GM12878 (cell line): ENCODE measurements at regions of chr6 and their contacts with region 1.

Region 1: DNA sequence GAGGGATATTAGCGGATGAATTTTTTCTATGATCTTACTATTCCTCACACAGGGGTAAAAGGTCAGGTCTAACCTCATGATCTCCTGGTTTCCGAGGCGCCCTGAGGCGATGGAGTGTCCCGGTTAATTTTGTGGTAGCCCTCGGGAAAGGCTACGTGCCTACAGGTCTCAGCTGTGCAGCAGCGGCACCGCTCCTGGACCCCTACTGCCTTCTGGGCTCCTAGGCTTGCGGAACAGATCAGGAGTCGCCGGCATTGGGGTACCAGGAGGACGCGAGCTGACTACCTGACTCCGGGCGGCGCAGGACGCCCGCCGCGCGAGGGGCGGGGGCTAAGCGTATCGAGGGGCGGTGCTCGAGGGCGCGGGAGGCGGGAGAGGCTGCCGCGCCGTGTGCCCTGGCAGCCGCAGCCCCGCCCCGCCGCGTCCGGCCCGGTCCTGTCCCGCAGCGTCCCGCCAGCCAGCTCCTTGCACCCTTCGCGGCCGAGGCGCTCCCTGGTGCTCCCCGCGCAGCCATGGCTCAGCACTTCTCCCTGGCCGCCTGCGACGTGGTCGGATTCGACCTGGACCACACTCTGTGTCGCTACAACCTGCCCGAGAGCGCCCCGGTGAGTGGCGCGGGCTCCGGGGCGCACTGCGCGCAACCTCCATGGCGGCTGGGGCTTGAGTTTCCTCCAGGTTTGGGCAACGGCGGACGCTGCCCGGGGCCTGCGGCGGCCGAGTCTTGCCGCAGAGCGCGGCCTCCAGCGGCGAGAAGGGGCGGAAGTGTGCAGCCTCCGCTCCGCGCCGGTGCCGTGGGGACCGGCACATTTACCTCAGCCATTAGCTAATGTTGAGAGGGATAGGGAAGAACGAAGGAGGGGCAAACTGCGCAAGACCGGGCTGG is at the start of gene NT5DC1:
- DNase-seq: peak; percentile 60
- ATAC-seq: peak; percentile 86
- H3K4me3 ChIP-seq: peak within 1 kb of the TSS; percentile 67
- H3K27ac ChIP-seq: peak within 1 kb of the TSS; percentile 93
- H3K4me1 ChIP-seq: peaks cover 19% of the 10 kb centered on the region
- H3K27me3 ChIP-seq: no peaks in the 10 kb centered on the region
- CTCF ChIP-seq: peak in 2 of 3 experiments; percentile 46 to 48; a peak in 5 of 6 replicates
- EP300 ChIP-seq: no peak
- POLR2A ChIP-seq: peak; percentile 97
- RAD21 ChIP-seq: peak; percentile 15; the same call in 1 of the 2 replicates
- polyA plus RNA-seq, gene NT5DC1: 43.5 to 67.0 TPM

Region 2: DNA sequence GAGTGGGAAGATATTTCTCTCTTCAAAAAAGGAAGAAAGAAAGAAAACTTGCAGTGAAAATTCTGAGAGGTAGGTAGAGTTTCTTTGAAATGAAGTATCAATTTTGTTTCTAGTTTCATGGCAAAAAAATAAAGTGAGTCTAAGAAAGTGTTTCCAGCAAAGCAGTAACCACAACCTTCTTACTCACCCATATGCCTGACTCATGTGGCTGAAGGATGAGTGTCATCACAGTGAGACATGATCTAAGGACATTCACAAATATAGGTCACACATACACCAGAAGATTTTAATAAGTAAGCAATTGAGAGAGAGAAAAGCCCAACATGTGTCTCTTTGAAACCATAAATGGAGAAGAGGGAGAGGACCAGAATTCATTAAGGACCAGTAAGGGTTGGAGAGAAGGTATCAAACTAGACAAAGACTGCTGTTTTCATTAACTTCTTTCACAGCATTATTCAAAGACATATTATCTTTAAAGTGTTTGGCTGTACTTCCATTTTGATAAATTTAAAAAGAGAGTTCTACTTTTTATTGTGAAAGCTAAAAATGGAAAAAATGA is 209.5 kb before region 1 on chr6:
- CTCF ChIA-PET with region 1: interaction called, 7 read pairs
- POLR2A ChIA-PET with region 1: no interaction called
- RAD21 ChIA-PET with region 1: interaction called, 4 read pairs
- SMC1A ChIA-PET with region 1: interaction called, 6 read pairs
- in situ Hi-C with region 1: loop called (anchors 10 kb)
- intact Hi-C with region 1: loop called (anchors 2 kb)
- DNase-seq: peak; percentile 70
- ATAC-seq: peak; percentile 93
- H3K4me3 ChIP-seq: no peak overlapping the region
- H3K27ac ChIP-seq: peak overlapping the region; percentile 58
- H3K4me1 ChIP-seq: peaks cover 26% of the 10 kb centered on the region
- H3K27me3 ChIP-seq: no peaks in the 10 kb centered on the region
- CTCF ChIP-seq: no peak
- EP300 ChIP-seq: peak in 1 of 2 experiments; percentile 92; a peak in 3 of 4 replicates
- POLR2A ChIP-seq: no peak
- RAD21 ChIP-seq: no peak

Region 3: GRCh38 chr6:115972679-115973078 is 128.0 kb before region 1 on chr6:
- CTCF ChIA-PET with region 1: interaction called, 11 read pairs
- POLR2A ChIA-PET with region 1: no interaction called
- RAD21 ChIA-PET with region 1: interaction called, 3 read pairs
- SMC1A ChIA-PET with region 1: interaction called, 6 read pairs
- in situ Hi-C with region 1: no loop called
- intact Hi-C with region 1: no loop called
- DNase-seq: no peak
- ATAC-seq: peak; percentile 75
- H3K4me3 ChIP-seq: no peak overlapping the region
- H3K27ac ChIP-seq: no peak overlapping the region
- H3K4me1 ChIP-seq: no peaks in the 10 kb centered on the region
- H3K27me3 ChIP-seq: no peaks in the 10 kb centered on the region
- CTCF ChIP-seq: peak in 1 of 3 experiments; percentile 3; a peak in 1 of 6 replicates
- EP300 ChIP-seq: no peak
- POLR2A ChIP-seq: no peak
- RAD21 ChIP-seq: peak; percentile 25; the same call in 1 of the 2 replicates

Region 4: GRCh38 chr6:116016846-116017545 is 83.7 kb before region 1 on chr6:
- CTCF ChIA-PET with region 1: interaction called, 183 read pairs
- POLR2A ChIA-PET with region 1: interaction called, 51 read pairs
- RAD21 ChIA-PET with region 1: interaction called, 102 read pairs
- SMC1A ChIA-PET with region 1: interaction called, 91 read pairs
- in situ Hi-C with region 1: loop called (anchors 5 kb)
- intact Hi-C with region 1: no loop called
- DNase-seq: no peak
- ATAC-seq: peak; percentile 27
- H3K4me3 ChIP-seq: peak overlapping the region; percentile 39; the same call in 1 of the 2 replicates
- H3K27ac ChIP-seq: peak overlapping the region; percentile 90
- H3K4me1 ChIP-seq: peaks cover 69% of the 10 kb centered on the region
- H3K27me3 ChIP-seq: no peaks in the 10 kb centered on the region
- CTCF ChIP-seq: no peak
- EP300 ChIP-seq: no peak
- POLR2A ChIP-seq: no peak
- RAD21 ChIP-seq: no peak

Region 5: GRCh38 chr6:116073765-116074419 is 26.8 kb before region 1 on chr6:
- CTCF ChIA-PET with region 1: interaction called, 4 read pairs
- POLR2A ChIA-PET with region 1: no interaction called
- RAD21 ChIA-PET with region 1: interaction called, 4 read pairs
- SMC1A ChIA-PET with region 1: interaction called, 10 read pairs
- in situ Hi-C with region 1: no loop called
- intact Hi-C with region 1: no loop called
- DNase-seq: no peak
- ATAC-seq: no peak
- H3K4me3 ChIP-seq: no peak overlapping the region
- H3K27ac ChIP-seq: no peak overlapping the region
- H3K4me1 ChIP-seq: no peaks in the 10 kb centered on the region
- H3K27me3 ChIP-seq: no peaks in the 10 kb centered on the region
- CTCF ChIP-seq: no peak
- EP300 ChIP-seq: no peak
- POLR2A ChIP-seq: no peak
- RAD21 ChIP-seq: no peak

Region 6: GRCh38 chr6:116111552-116112528 is 11.2 kb after region 1 on chr6:
- CTCF ChIA-PET with region 1: interaction called, 60 read pairs
- POLR2A ChIA-PET with region 1: interaction called, 6 read pairs
- RAD21 ChIA-PET with region 1: interaction called, 12 read pairs
- SMC1A ChIA-PET with region 1: interaction called, 20 read pairs
- in situ Hi-C with region 1: no loop called
- intact Hi-C with region 1: no loop called
- DNase-seq: no peak
- ATAC-seq: peak; percentile 90
- H3K4me3 ChIP-seq: no peak overlapping the region
- H3K27ac ChIP-seq: no peak overlapping the region
- H3K4me1 ChIP-seq: peaks cover 2% of the 10 kb centered on the region; the same call in 1 of the 2 replicates
- H3K27me3 ChIP-seq: no peaks in the 10 kb centered on the region
- CTCF ChIP-seq: peak; percentile 59 to 78 (median 74)
- EP300 ChIP-seq: no peak
- POLR2A ChIP-seq: no peak
- RAD21 ChIP-seq: peak; percentile 65

Region 7: DNA sequence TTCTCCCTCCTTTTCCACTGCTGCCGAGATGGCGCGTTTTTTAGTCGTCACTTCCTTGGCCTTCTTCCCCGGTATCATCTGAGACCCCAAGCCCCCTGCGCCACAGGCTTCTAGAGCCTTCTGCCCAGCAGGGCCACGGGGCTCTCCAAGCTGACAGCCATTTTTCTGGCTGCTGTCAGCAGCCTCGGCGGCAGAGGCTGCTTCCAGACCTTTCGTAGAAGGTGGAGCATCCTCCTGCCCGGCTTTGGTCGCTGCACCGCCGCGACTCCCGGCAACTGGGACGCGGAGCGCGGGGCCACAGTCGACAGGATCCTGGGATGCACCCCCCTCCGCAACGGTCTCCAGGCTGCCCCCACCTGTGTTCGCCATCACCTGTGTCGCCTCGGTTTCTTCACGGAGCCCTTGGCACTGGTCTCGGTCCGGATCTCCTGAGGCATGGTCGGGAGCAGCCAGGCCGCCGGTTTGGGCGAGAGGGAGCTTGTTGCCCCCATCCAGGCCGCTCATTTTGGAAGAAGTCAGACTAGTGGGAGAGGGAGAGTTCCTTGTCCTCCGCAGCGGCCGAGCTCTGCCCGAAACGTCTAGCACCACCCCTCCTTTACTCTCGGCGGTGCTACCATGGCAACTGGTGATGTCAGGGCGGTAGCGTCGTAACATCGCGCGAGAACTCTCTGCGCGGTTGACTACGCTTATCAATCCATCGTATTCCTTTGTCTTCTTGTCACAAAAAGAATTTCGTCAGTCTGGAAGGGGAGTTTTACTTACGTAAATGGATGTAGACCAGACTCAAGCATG is 153.0 kb after region 1 on chr6 and contains the start of gene TSPYL4:
- CTCF ChIA-PET with region 1: no interaction called
- POLR2A ChIA-PET with region 1: no interaction called
- RAD21 ChIA-PET with region 1: no interaction called
- SMC1A ChIA-PET with region 1: no interaction called
- in situ Hi-C with region 1: no loop called
- intact Hi-C with region 1: no loop called
- DNase-seq: peak; percentile 87
- ATAC-seq: peak; percentile 96
- H3K4me3 ChIP-seq: peak within 1 kb of the TSS; percentile 94
- H3K27ac ChIP-seq: peak within 1 kb of the TSS; percentile 90
- H3K4me1 ChIP-seq: peaks cover 13% of the 10 kb centered on the region
- H3K27me3 ChIP-seq: no peaks in the 10 kb centered on the region
- CTCF ChIP-seq: no peak
- EP300 ChIP-seq: no peak
- POLR2A ChIP-seq: peak; percentile 84
- RAD21 ChIP-seq: no peak
- polyA plus RNA-seq, gene TSPYL4: 1.5 to 2.2 TPM